Tibial artery (tissue), 4 donors: ENCODE measurements at regions of chr3 and their contacts with region 1.

Region 1: DNA sequence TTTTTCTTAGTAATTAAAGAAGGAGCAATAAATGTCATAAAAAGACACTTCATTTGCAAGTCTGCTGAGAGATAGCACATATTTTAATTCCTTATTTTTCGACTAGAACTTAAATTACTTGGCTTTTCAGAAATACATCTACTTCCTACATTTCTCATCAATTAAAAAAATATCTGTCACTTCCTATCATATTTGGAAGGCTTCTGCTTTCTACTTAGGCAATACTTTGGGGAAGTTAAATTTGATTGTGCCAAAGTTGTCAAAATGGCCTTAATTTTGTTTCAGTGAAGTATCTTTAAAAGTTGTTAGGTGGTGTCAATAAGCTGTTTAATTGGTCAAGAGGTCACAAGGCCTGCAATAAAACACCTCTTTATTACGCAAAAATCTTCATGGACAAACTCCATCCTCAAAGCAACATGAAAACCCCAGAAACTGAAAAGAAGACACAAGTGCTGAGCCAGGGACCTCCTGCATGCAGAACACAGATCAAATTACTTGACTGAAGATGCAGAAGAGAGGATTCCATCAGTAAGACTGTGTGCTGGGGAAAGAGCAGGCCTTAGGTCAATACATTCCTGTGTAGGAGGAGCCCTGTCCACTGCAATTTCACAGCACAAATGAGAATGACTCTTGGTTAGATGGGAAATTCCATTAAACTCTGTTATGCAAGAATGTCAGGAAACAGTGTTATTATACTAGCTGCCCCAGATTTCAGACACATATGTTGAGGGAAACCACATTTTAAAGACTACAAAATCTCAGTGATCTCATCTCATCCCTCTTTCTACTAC is 48.0 kb upstream of the FSTL1 start:
- DNase-seq: peak in 1 of 2 donors; percentile 44
- H3K4me3 ChIP-seq: no peak overlapping the region
- H3K27ac ChIP-seq: peak overlapping the region in 1 of 2 donors; percentile 51
- H3K4me1 ChIP-seq: peaks cover 0 to 34% (median 14%) of the 10 kb centered on the region in 4 donors
- H3K27me3 ChIP-seq: no peaks in the 10 kb centered on the region
- CTCF ChIP-seq: no peak

Region 2: GRCh38 chr3:120348981-120349818 is 149.6 kb before region 1 on chr3 and contains the start of gene LRRC58:
- intact Hi-C with region 1: loop called (anchors 10 kb)
- DNase-seq: peak; percentile 89 to 95
- H3K4me3 ChIP-seq: peak within 1 kb of the TSS; percentile 65 to 87
- H3K27ac ChIP-seq: peak within 1 kb of the TSS; percentile 88
- H3K4me1 ChIP-seq: peaks cover 0 to 26% (median 17%) of the 10 kb centered on the region in 4 donors
- H3K27me3 ChIP-seq: no peaks in the 10 kb centered on the region
- CTCF ChIP-seq: no peak